PC-3 (cell line): ENCODE measurements at regions of chr7 and their contacts with region 1.

Region 1: DNA sequence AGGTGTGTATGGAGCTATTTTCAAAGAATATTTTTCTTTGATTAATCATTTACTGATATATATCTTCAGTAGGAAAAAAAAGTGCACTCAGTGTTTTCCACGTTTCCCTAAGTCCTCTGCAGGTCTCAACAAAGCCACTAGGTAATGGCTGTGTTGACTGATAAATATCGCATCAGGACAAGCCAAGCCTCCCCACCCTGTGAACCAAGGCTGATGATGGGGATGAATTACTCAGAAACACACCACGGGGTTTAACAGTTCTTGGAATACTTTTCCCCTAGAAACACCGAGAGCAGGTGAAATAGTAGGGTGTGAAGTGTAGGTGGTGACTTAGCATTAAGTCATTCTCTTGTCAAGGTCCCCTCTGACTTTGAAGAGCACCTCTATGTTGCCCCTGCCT is 423.5 kb upstream of the IGFBP3 start:
- DNase-seq: no peak
- ATAC-seq: no peak
- H3K4me3 ChIP-seq: no peak overlapping the region
- H3K27ac ChIP-seq: no peak overlapping the region
- H3K4me1 ChIP-seq: no peaks in the 10 kb centered on the region
- H3K27me3 ChIP-seq: no peaks in the 10 kb centered on the region
- CTCF ChIP-seq: no peak

Region 2: DNA sequence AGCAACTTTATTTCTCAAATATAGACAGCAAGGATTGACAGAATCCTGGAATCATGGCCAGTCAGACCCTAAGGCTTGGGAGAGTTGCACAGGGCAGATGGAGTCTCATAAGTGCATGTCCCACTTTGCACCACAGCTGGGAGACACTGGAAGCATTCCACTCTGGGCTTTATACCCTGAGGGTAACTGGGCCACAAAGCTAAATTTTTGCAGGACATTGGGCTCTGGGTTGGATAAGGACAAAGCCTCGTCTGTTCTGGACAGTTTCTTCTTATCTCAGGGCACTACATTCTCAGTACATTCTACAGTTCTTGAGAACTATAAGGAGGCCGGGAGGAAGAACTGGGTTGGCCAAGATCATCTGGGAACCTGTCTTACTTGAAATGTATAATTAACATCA is 265.1 kb before region 1 on chr7:
- CTCF ChIA-PET with region 1: interaction called, 16 read pairs
- POLR2A ChIA-PET with region 1: no interaction called
- intact Hi-C with region 1: no loop called
- DNase-seq: no peak
- ATAC-seq: no peak
- H3K4me3 ChIP-seq: no peak overlapping the region
- H3K27ac ChIP-seq: no peak overlapping the region
- H3K4me1 ChIP-seq: peaks cover 12% of the 10 kb centered on the region
- H3K27me3 ChIP-seq: no peaks in the 10 kb centered on the region
- CTCF ChIP-seq: no peak